Caco-2 (cell line): ENCODE measurements at regions of chr5 and their contacts with region 1.

Region 1: DNA sequence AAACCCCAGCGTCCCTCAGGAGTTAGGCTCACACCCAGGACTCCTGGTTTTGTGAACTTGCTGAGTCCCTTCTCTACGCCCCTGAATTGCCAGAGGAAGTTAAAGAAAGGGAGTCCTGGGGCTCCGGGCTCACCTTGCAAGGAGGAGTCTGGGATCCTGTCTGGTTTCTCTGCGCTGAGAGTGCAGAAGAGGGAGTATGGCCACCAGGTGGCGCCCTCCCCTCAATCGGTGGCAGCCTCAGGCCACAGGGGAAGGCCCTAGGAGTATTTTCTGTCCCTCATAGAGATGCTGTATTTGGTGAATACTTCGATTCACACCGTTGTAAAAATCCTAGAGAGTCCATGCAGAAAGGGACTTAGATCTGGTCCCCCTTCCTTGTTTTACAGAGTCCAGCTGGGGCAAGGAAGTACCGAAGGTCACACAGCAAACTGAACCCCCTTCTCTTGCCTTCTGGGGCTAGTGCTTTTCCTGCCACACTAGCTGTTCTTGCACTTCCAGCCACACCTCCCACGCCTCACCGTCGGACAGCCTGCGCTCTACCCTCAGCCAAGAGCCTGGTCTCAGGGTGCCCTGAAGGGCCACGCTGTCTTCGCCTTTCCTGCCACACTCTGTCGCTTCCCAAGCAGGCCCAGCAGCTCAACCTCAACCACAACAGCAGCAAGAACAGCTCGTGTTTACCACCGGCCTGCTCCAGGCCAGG is 10.2 kb downstream of the HAND1 start:
- DNase-seq: peak; percentile 74 to 87
- H3K4me3 ChIP-seq: no peak overlapping the region
- H3K4me3 Mint-ChIP-seq: no peak overlapping the region
- H3K27ac Mint-ChIP-seq: no peak overlapping the region
- H3K4me1 ChIP-seq: peaks cover 8% of the 10 kb centered on the region
- H3K4me1 Mint-ChIP-seq: peaks cover 11% of the 10 kb centered on the region
- H3K27me3 ChIP-seq: no peaks in the 10 kb centered on the region; the same call in 1 of the 2 replicates
- H3K27me3 Mint-ChIP-seq: no peaks in the 10 kb centered on the region
- CTCF ChIP-seq: peak; percentile 93 to 94

Region 2: DNA sequence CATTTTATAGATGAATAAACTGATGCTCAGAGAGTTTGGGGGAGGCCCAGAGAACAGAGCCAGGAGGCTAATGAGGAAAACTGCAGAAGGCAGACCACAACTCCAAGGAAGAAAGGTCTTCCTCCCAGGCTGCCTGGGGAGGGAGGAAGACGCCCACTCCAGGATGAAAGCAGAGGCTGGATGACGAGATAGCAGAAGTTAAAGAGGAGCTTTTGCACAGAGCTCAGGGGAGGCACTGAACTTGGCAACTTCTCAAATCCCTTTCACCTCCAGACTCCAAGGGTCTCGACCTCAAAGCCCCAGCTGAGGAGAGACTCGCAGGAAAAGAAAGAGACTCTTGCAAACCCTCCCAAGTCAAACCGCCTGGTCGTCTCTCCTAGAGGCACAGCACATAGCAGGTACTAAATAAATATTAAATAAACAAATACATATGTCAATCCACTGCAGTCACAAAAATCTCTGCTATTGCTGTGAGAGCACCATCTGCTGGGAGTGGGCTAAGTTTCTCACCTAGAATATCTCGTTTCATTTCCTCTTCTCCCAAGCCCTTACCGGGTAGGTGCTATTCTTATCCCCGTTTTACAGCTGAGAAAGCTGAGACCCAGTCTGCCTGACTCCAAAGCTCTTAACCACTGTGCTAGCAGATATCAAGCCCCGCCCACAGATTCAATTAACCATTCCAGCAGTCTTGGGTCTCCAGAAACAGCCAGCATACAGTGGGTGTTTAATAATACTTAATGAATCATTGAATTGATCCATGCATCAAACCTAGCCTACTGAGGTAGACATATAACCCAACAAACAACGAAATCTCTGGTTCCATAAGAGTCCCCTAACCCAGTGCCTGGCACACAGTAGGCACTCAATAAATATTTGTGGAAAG is 108.0 kb after region 1 on chr5:
- CTCF ChIA-PET with region 1: no interaction called
- POLR2A ChIA-PET with region 1: no interaction called
- intact Hi-C with region 1: loop called (anchors 1 kb)
- DNase-seq: peak in 1 of 2 experiments; percentile 12
- H3K4me3 ChIP-seq: no peak overlapping the region
- H3K4me3 Mint-ChIP-seq: no peak overlapping the region
- H3K27ac Mint-ChIP-seq: no peak overlapping the region
- H3K4me1 ChIP-seq: peaks cover 5% of the 10 kb centered on the region; the same call in 1 of the 2 replicates
- H3K4me1 Mint-ChIP-seq: no peaks in the 10 kb centered on the region
- H3K27me3 ChIP-seq: no peaks in the 10 kb centered on the region
- H3K27me3 Mint-ChIP-seq: peaks cover 5% of the 10 kb centered on the region
- CTCF ChIP-seq: peak in 1 of 2 experiments; percentile 14

Region 3: GRCh38 chr5:154610321-154611154 is 142.7 kb after region 1 on chr5:
- CTCF ChIA-PET with region 1: interaction called, 3 read pairs
- POLR2A ChIA-PET with region 1: no interaction called
- intact Hi-C with region 1: loop called (anchors 1 kb)
- DNase-seq: peak; percentile 82 to 84
- H3K4me3 ChIP-seq: peak overlapping the region; percentile 33
- H3K4me3 Mint-ChIP-seq: peak overlapping the region; percentile 60
- H3K27ac Mint-ChIP-seq: no peak overlapping the region
- H3K4me1 ChIP-seq: peaks cover 19% of the 10 kb centered on the region
- H3K4me1 Mint-ChIP-seq: peaks cover 18% of the 10 kb centered on the region
- H3K27me3 ChIP-seq: no peaks in the 10 kb centered on the region; the same call in 1 of the 2 replicates
- H3K27me3 Mint-ChIP-seq: peaks cover 8% of the 10 kb centered on the region
- CTCF ChIP-seq: peak; percentile 95 to 99